Naive thymus-derived CD4-positive, alpha-beta T cell (primary cell): ENCODE measurements at regions of chr16 and their contacts with region 1.

Region 1: GRCh38 chr16:19521471-19522396 is at the start of gene GDE1:
- DNase-seq: peak; percentile 82 to 95 (median 89)
- ATAC-seq: peak; percentile 88
- H3K4me3 ChIP-seq: peak within 1 kb of the TSS; percentile 88
- H3K4me3 Mint-ChIP-seq: peak within 1 kb of the TSS; percentile 86 to 99 (median 95)
- H3K27ac ChIP-seq: peak within 1 kb of the TSS; percentile 82
- H3K27ac Mint-ChIP-seq: peak within 1 kb of the TSS; percentile 72 to 95 (median 88)
- H3K4me1 ChIP-seq: peaks cover 15 to 31% of the 10 kb centered on the region in 2 donors
- H3K4me1 Mint-ChIP-seq: peaks cover 48 to 74% (median 63%) of the 10 kb centered on the region in 7 donors
- H3K27me3 ChIP-seq: no peaks in the 10 kb centered on the region
- H3K27me3 Mint-ChIP-seq: no peaks in the 10 kb centered on the region
- total RNA-seq, gene GDE1: 16.6 to 27.6 (median 18.8) TPM

Region 2: DNA sequence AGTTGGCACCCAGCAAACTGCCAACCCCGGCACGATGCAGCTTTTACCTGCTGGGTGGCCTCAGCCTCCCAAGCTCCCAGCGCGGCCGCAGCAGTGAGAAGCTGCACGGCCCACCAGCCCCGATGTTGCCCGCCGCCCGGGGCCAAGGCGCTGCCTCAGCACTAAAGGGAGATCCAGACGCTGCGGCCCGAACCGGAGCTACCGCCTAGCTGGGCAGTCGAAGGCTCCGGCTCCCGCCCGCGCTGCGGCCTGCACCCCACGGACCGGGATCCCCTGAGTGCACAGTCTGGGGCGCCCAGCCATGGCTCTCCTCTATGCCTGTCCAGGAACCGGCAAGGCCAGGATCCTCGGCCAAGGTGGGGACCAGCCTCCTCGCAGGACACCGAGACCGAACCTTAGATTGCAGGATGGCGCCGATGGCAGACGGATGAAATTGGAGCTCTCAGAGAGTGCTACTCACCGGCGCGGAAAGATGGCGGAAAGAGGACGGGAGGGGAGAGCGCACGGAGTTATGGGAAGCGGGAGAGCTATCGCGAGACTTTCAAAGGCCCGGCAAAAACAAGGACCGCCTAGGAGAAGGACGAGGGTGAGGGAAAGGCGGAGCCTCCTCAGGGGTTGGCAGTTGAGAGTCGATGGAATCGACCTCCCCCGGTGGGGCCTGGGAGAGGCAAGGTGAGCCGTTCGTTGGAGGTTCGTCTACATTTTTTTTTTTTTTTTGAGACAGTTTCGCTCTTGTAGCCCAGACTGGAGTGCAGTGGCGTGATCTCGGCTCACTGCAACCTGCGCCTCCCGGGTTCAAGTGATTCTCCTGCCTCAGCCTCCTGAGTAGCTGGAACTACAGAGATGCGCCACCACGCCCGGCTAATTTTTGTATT is 731.6 kb before region 1 on chr16 and contains the start of gene RPS15A:
- CTCF ChIA-PET with region 1: no interaction called
- POLR2A ChIA-PET with region 1: interaction called, 3 read pairs
- intact Hi-C with region 1: loop called in 1 of 2 experiments (anchors 1 kb)
- DNase-seq: peak; percentile 72 to 97 (median 91)
- ATAC-seq: peak; percentile 98
- H3K4me3 ChIP-seq: peak within 1 kb of the TSS; percentile 98
- H3K4me3 Mint-ChIP-seq: peak within 1 kb of the TSS; percentile 92 to 99 (median 96)
- H3K27ac ChIP-seq: peak within 1 kb of the TSS; percentile 91
- H3K27ac Mint-ChIP-seq: peak within 1 kb of the TSS; percentile 89 to 96 (median 94)
- H3K4me1 ChIP-seq: peaks cover 22 to 43% of the 10 kb centered on the region in 2 donors
- H3K4me1 Mint-ChIP-seq: peaks cover 35 to 63% (median 50%) of the 10 kb centered on the region in 7 donors
- H3K27me3 ChIP-seq: no peaks in the 10 kb centered on the region
- H3K27me3 Mint-ChIP-seq: peaks cover 0 to 2% (median 0%) of the 10 kb centered on the region in 5 donors
- total RNA-seq, gene RPS15A: 2,060 to 3,897 (median 3,815) TPM

Region 3: DNA sequence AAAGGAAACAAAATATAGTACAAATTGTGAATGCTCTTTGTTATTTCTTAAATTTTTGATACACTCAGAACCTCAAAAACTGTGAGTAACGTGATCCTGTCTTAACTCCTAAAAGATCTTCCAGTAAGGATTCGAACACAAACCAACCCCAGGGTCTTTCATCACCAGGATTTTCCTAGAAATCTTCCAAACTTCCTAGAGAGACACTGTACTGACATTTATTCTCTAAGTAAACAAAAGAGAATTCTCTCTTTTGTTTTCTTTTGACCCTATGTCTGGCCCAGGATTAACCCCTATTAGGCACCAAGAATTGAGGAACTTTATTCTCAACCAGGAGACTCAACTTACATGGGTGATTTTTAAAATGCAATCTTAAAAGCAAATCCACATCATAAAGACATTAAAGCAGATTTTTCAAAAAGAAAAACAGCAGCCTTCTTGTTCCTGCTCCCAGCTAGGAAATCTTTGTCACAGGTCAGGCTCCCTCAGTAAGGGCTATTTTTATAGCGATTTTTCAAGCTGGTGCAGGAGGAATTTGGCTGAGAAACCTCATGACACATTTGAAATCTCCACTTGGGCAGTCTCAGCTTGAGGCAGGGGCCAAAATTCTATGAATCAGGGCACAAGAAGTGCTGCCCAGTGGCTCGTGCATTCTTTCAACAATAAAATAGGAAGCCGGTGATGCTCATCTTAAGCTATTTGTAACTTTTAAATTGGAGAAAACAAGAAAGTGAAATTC is 589.3 kb before region 1 on chr16:
- CTCF ChIA-PET with region 1: no interaction called
- POLR2A ChIA-PET with region 1: no interaction called
- intact Hi-C with region 1: loop called in 1 of 2 experiments (anchors 5 kb)
- DNase-seq: no peak
- ATAC-seq: no peak
- H3K4me3 ChIP-seq: no peak overlapping the region
- H3K4me3 Mint-ChIP-seq: no peak overlapping the region
- H3K27ac ChIP-seq: no peak overlapping the region
- H3K27ac Mint-ChIP-seq: peak overlapping the region in 1 of 9 donors; percentile 43
- H3K4me1 ChIP-seq: no peaks in the 10 kb centered on the region
- H3K4me1 Mint-ChIP-seq: peaks cover 0 to 20% (median 6%) of the 10 kb centered on the region in 7 donors
- H3K27me3 ChIP-seq: no peaks in the 10 kb centered on the region
- H3K27me3 Mint-ChIP-seq: peaks cover 0 to 2% (median 0%) of the 10 kb centered on the region in 5 donors

Region 4: GRCh38 chr16:19114352-19115052 is 407.2 kb before region 1 on chr16:
- CTCF ChIA-PET with region 1: no interaction called
- POLR2A ChIA-PET with region 1: no interaction called
- intact Hi-C with region 1: loop called in 1 of 2 experiments (anchors 5 kb)
- DNase-seq: peak in 1 of 9 donors; percentile 49
- ATAC-seq: peak; percentile 36
- H3K4me3 ChIP-seq: no peak overlapping the region
- H3K4me3 Mint-ChIP-seq: peak overlapping the region in 2 of 10 donors; percentile 68 to 82
- H3K27ac ChIP-seq: no peak overlapping the region
- H3K27ac Mint-ChIP-seq: peak overlapping the region in 1 of 9 donors; percentile 78
- H3K4me1 ChIP-seq: peaks cover 0 to 8% of the 10 kb centered on the region in 2 donors
- H3K4me1 Mint-ChIP-seq: peaks cover 0 to 36% (median 5%) of the 10 kb centered on the region in 7 donors
- H3K27me3 ChIP-seq: no peaks in the 10 kb centered on the region
- H3K27me3 Mint-ChIP-seq: peaks cover 18 to 49% (median 28%) of the 10 kb centered on the region in 5 donors

Region 5: DNA sequence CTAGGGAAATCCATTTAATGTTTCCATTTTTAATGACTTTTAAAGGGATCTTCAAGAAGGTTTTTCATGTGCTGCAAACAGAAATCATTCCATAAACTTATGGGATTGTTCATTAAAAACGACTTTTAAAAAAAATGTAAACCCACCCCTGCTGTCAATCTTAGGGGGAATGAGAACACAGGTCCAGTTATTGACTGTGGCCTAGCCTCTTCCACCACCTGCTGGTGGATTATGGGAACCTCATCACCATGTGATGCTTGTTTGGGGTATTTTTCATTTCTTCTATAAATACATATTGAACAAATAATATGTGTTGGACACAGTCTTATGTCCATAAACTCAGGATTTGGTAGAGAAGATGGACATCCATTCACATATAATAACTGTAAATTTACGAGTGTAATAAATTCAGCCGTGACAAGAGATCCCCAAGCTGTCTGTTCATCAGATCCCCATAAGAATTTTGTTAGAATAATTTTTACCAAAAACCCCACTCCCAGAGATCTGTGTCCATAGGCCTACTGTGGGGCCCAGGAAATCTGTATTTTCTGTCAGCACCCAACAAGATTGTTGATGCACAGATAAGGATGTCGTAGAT is 146.1 kb before region 1 on chr16:
- CTCF ChIA-PET with region 1: no interaction called
- POLR2A ChIA-PET with region 1: no interaction called
- intact Hi-C with region 1: no loop called
- DNase-seq: peak in 3 of 9 donors; percentile 4 to 29 (median 9)
- ATAC-seq: peak; percentile 45
- H3K4me3 ChIP-seq: no peak overlapping the region
- H3K4me3 Mint-ChIP-seq: no peak overlapping the region
- H3K27ac ChIP-seq: no peak overlapping the region
- H3K27ac Mint-ChIP-seq: no peak overlapping the region
- H3K4me1 ChIP-seq: no peaks in the 10 kb centered on the region
- H3K4me1 Mint-ChIP-seq: peaks cover 0 to 12% (median 0%) of the 10 kb centered on the region in 7 donors
- H3K27me3 ChIP-seq: no peaks in the 10 kb centered on the region
- H3K27me3 Mint-ChIP-seq: peaks cover 0 to 6% (median 3%) of the 10 kb centered on the region in 5 donors

Region 6: GRCh38 chr16:19555162-19555937 is 33.6 kb after region 1 on chr16 and contains the start of gene VPS35L:
- CTCF ChIA-PET with region 1: interaction called, 19 read pairs
- POLR2A ChIA-PET with region 1: interaction called, 37 read pairs
- intact Hi-C with region 1: loop called (anchors 1 kb)
- DNase-seq: peak; percentile 92 to 97 (median 95)
- ATAC-seq: peak; percentile 98
- H3K4me3 ChIP-seq: peak within 1 kb of the TSS; percentile 86
- H3K4me3 Mint-ChIP-seq: peak within 1 kb of the TSS; percentile 91 to 100 (median 97)
- H3K27ac ChIP-seq: peak within 1 kb of the TSS; percentile 78
- H3K27ac Mint-ChIP-seq: peak within 1 kb of the TSS; percentile 92 to 98 (median 95)
- H3K4me1 ChIP-seq: peaks cover 4 to 13% of the 10 kb centered on the region in 2 donors
- H3K4me1 Mint-ChIP-seq: peaks cover 0 to 30% (median 24%) of the 10 kb centered on the region in 7 donors
- H3K27me3 ChIP-seq: no peaks in the 10 kb centered on the region
- H3K27me3 Mint-ChIP-seq: no peaks in the 10 kb centered on the region
- total RNA-seq, gene VPS35L: 38.6 to 51.1 (median 46.6) TPM

Region 7: GRCh38 chr16:19886073-19886941 is 364.6 kb after region 1 on chr16:
- CTCF ChIA-PET with region 1: no interaction called
- POLR2A ChIA-PET with region 1: no interaction called
- intact Hi-C with region 1: loop called in 1 of 2 experiments (anchors 1 kb)
- DNase-seq: peak; percentile 66 to 85 (median 78)
- ATAC-seq: peak; percentile 78
- H3K4me3 ChIP-seq: peak overlapping the region; percentile 70
- H3K4me3 Mint-ChIP-seq: peak overlapping the region; percentile 84 to 96 (median 90)
- H3K27ac ChIP-seq: no peak overlapping the region
- H3K27ac Mint-ChIP-seq: peak overlapping the region in 6 of 9 donors; percentile 17 to 72 (median 52)
- H3K4me1 ChIP-seq: peaks cover 9 to 23% of the 10 kb centered on the region in 2 donors
- H3K4me1 Mint-ChIP-seq: peaks cover 12 to 26% (median 22%) of the 10 kb centered on the region in 7 donors
- H3K27me3 ChIP-seq: peaks cover 0 to 12% of the 10 kb centered on the region in 2 donors
- H3K27me3 Mint-ChIP-seq: peaks cover 4 to 39% (median 13%) of the 10 kb centered on the region in 5 donors

Region 8: DNA sequence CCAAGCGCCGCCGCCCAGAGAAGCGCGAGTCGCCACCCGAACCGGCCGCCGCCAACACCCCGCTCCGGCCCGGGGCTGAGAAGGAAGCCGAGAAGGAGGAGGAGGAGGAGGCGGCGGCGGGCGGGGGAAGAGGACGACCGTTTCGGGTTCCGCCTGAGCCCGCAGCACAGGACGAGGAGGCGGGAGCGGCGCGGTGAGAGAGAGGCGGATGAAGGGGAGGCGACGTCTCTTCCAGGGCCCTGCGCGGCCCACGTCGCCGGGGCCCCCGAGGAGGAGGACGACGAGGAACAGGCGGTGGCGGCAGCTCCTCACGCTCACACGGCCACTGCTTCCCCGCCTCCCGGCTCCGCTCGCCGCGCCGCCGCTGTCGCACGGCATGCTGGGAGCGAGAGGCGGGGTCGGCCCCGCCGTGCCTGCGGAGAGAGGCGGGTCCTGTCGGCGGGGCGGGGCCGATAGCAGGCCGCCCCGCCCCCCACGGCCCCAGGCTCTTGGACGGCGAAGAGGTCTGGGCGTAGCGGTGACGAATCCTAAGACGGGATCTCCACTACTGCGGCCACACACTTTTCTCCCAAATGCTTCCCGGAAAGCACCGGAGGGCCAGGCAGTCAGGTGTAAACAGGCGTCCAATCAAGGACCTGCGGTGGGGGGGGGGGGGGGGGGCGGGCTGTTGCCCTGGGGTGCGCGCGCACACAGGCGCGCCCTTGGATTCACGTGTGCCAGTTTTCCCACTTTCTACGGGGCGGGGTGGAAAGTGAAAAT is 1980.4 kb after region 1 on chr16:
- CTCF ChIA-PET with region 1: no interaction called
- POLR2A ChIA-PET with region 1: no interaction called
- intact Hi-C with region 1: loop called in 1 of 2 experiments (anchors 10 kb)
- DNase-seq: peak; percentile 85 to 99 (median 96)
- ATAC-seq: peak; percentile 90
- H3K4me3 ChIP-seq: peak overlapping the region; percentile 91
- H3K4me3 Mint-ChIP-seq: peak overlapping the region; percentile 76 to 94 (median 86)
- H3K27ac ChIP-seq: peak overlapping the region; percentile 92
- H3K27ac Mint-ChIP-seq: peak overlapping the region; percentile 71 to 93 (median 89)
- H3K4me1 ChIP-seq: peaks cover 4 to 7% of the 10 kb centered on the region in 2 donors
- H3K4me1 Mint-ChIP-seq: peaks cover 11 to 26% (median 16%) of the 10 kb centered on the region in 7 donors
- H3K27me3 ChIP-seq: no peaks in the 10 kb centered on the region
- H3K27me3 Mint-ChIP-seq: no peaks in the 10 kb centered on the region